Activated T-helper 1 cell treated with anti-CD3 and anti-CD28 coated beads, Interleukin-12 subunit alpha, Interleukin-12 subunit beta, Interleukin-2, Interleukin-4 antibody, amounts not matched to agents 30 ng/mL and 10 ng/mL and 1 ng/mL, durations not matched to agents 14 hours and 24 hours and 36 hours (primary cell): ENCODE measurements at regions of chr1 and their contacts with region 1.

Region 1: GRCh38 chr1:198520524-198521254 is 19.8 kb downstream of the ATP6V1G3 start:
- DNase-seq: no peak
- H3K4me3 Mint-ChIP-seq: peak overlapping the region; percentile 71
- H3K27ac Mint-ChIP-seq: peak overlapping the region; percentile 84
- H3K4me1 Mint-ChIP-seq: peaks cover 62% of the 10 kb centered on the region
- H3K27me3 Mint-ChIP-seq: no peaks in the 10 kb centered on the region

Region 2: GRCh38 chr1:197775282-197776262 is 745.1 kb before region 1 on chr1 and contains the start of gene DENND1B:
- intact Hi-C with region 1: loop called (anchors 1 kb)
- DNase-seq: peak; percentile 80
- H3K4me3 Mint-ChIP-seq: peak within 1 kb of the TSS; percentile 85
- H3K27ac Mint-ChIP-seq: peak within 1 kb of the TSS; percentile 95
- H3K4me1 Mint-ChIP-seq: peaks cover 72% of the 10 kb centered on the region
- H3K27me3 Mint-ChIP-seq: no peaks in the 10 kb centered on the region
- total RNA-seq, gene DENND1B: 15.3 and 16.5 TPM in 2 replicates

Region 3: DNA sequence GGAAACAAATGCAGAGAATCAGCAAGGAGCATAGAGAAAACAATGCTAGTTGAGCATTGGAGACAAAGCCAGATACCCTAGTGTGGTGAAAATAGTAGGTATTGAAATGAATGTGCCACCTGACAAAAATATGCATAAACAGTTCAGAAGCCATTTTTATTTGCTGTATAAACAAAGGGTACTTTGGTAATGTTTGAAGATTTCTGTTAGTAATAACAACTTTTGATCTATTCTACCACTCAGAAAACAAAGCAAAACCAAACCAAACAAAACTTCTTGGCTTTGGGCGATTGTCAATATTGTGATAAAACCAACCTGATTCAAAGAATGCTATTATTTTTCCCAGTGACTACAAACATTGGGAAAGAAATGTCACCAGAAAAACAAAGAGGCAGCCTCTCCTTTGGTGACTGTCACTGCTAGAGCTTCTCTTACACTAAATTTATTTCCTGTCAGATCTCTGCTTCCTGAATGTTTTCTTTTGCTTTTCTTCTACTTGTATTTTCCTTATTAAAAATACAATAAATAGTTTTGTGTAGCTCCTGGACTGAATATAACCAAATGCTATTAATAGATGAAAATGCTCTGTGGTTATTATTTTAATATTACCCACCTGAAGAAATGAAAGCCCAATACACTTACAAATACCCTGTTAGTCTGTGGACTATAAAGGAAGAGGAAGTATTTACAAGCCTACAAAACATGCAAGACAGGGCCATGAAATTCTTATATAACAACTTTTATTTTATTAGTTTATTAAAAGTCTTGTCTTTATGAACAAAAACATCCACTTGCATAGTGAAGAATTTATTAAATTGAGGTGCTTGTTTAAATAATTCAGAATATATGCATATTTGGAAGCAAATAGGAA is 14.1 kb after region 1 on chr1:
- intact Hi-C with region 1: loop called (anchors 1 kb)
- DNase-seq: no peak
- H3K4me3 Mint-ChIP-seq: peak overlapping the region; percentile 41
- H3K27ac Mint-ChIP-seq: peak overlapping the region; percentile 6
- H3K4me1 Mint-ChIP-seq: peaks cover 50% of the 10 kb centered on the region
- H3K27me3 Mint-ChIP-seq: no peaks in the 10 kb centered on the region

Region 4: DNA sequence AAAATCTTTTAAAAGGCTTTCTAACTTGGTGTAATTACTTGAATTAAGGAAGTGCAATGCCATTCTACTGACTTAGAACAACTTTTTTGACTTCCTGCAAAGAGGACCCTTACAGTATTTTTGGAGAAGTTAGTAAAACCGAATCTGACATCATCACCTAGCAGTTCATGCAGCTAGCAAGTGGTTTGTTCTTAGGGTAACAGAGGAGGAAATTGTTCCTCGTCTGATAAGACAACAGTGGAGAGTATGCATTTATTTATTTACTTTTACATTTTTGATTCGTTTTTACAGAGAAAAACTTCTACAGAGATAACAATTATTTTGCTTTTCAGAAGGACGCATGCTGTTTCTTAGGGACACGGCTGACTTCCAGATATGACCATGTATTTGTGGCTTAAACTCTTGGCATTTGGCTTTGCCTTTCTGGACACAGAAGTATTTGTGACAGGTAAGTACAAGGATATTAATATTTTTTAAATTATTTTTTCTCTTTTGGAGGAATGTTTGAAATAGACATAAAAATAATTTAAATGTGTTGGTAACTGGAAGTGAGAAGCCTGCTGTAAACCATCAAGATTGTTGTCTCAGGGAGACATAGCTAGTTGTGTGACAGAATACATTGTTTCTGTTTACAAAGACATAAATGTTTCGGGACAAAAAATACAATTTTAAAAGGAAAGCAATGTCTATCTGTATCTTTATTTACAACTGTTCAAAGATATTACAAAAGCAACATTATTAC is 118.4 kb after region 1 on chr1 and contains the start of gene PTPRC:
- intact Hi-C with region 1: loop called (anchors 1 kb)
- DNase-seq: no peak
- H3K4me3 Mint-ChIP-seq: peak within 1 kb of the TSS; percentile 92
- H3K27ac Mint-ChIP-seq: peak within 1 kb of the TSS; percentile 96
- H3K4me1 Mint-ChIP-seq: peaks cover 54% of the 10 kb centered on the region
- H3K27me3 Mint-ChIP-seq: no peaks in the 10 kb centered on the region
- total RNA-seq, gene PTPRC: 512 and 516 TPM in 2 replicates

Region 5: DNA sequence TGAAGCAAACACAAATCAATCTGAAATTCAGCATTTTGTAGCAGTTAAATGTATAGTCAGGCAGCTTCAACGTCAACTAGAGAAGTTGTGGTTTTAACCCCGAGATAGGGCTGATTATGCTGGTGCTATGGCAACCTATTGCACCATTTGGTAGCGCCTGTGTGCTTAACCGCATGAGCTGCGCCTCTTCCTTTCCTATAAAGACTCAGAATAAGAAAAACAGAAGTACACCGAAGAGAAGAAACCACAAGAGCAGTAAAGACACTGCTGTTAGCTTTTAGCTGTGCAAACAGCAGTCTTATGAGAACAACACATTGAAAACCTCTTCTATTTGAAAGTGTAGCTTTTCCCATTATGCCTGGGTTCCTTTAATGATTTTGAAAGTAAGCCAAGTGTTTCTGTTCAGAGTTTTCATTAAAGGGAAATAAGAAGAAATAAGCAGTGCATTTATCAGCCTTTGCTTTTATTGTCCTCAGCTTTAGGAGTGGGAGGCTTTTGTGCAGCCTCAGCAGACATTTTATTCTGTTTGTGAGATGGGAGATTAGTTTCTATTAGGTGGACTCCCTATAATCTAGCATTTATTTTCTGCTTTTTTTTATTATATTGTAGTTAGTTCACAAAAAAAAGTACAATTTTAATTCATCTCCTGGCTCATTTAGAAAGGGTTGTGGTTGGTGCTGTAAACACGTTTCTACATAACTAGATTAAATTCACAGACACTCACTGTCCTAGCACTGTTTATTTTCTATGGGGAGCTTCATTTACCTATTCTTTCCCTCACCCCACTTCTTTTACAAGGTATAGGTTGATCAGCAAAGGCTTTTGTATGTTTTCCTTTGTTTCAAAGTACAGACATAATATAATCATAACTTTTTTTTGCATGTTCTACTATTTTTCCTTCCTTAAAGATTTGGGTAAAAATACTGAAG is 161.4 kb after region 1 on chr1:
- intact Hi-C with region 1: loop called (anchors 1 kb)
- DNase-seq: peak; percentile 86
- H3K4me3 Mint-ChIP-seq: peak overlapping the region; percentile 78
- H3K27ac Mint-ChIP-seq: peak overlapping the region; percentile 91
- H3K4me1 Mint-ChIP-seq: peaks cover 80% of the 10 kb centered on the region
- H3K27me3 Mint-ChIP-seq: no peaks in the 10 kb centered on the region

Region 6: DNA sequence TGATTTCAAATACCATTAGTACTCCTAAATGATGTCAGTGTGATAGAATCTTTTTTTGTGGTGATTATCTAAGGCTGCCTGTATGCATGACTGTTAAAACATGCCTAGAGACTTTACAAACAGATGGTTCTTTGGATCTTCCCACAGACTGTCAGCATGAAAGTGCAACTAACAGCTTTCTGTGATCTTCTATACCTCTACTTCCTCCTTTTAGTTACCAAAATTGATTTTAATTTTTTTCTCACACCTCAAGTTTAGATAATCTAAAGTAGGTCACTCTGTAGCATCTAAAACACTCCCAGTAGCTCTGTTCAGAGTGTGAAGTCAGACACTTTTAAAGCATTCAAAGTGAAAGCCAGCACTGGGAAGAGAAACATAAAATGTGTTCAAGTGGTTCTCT is 652.7 kb after region 1 on chr1:
- intact Hi-C with region 1: loop called (anchors 5 kb)
- DNase-seq: peak; percentile 35
- H3K4me3 Mint-ChIP-seq: peak overlapping the region; percentile 31
- H3K27ac Mint-ChIP-seq: peak overlapping the region; percentile 73
- H3K4me1 Mint-ChIP-seq: peaks cover 60% of the 10 kb centered on the region
- H3K27me3 Mint-ChIP-seq: peaks cover 2% of the 10 kb centered on the region